Heart right ventricle (tissue), 16 donors: ENCODE measurements at regions of chr5 and their contacts with region 1.

Region 1: DNA sequence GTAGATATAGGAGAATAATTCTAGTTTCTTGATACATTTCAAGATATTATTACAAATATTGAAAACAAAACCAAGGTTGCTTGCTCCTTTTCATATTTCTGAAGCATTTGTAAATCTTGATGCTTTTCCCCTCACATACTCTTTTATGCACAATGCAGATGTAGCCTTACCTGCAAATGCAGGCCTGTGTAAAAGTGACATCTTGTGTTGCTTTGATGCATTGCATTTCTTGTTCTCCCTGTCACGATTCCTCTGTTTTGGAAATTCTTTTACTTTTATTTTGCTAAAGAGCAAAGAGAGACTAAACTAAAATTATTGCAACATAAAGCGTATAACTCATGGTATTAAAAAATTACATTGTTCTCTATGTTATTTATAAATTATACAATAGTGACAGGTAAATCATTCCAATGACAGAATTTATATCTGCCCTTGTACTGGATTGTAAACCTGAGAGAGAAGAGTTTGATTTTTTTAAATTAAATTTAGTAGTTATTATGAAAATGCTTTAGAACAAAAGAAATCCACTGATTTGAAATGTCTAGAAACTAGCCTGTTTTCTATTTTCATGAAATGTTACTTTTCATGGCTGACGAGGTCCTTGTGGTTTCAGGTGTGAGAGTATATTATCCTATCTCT is 970.0 kb downstream of the MAT2B start:
- DNase-seq: no peak
- ATAC-seq: no peak
- H3K4me3 ChIP-seq: no peak overlapping the region
- H3K27ac ChIP-seq: no peak overlapping the region
- H3K4me1 ChIP-seq: no peaks in the 10 kb centered on the region
- H3K27me3 ChIP-seq: no peaks in the 10 kb centered on the region
- CTCF ChIP-seq: peak; percentile 16 to 60 (median 46)

Region 2: GRCh38 chr5:164052536-164053093 is 422.8 kb before region 1 on chr5:
- intact Hi-C with region 1: loop called in 1 of 10 experiments (anchors 10 kb)
- DNase-seq: no peak
- ATAC-seq: no peak
- H3K4me3 ChIP-seq: no peak overlapping the region
- H3K27ac ChIP-seq: no peak overlapping the region
- H3K4me1 ChIP-seq: no peaks in the 10 kb centered on the region
- H3K27me3 ChIP-seq: no peaks in the 10 kb centered on the region
- CTCF ChIP-seq: no peak

Region 3: GRCh38 chr5:164370841-164371240 is 104.6 kb before region 1 on chr5:
- intact Hi-C with region 1: no loop called
- DNase-seq: no peak
- ATAC-seq: no peak
- H3K4me3 ChIP-seq: no peak overlapping the region
- H3K27ac ChIP-seq: no peak overlapping the region
- H3K4me1 ChIP-seq: no peaks in the 10 kb centered on the region
- H3K27me3 ChIP-seq: no peaks in the 10 kb centered on the region
- CTCF ChIP-seq: no peak